AG04450 (cell line): ENCODE measurements at regions of chr12 and their contacts with region 1.

Region 1: GRCh38 chr12:121811434-121812319 is 7.9 kb downstream of the SETD1B start:
- DNase-seq: no peak
- H3K4me3 ChIP-seq: peak overlapping the region; percentile 77
- H3K27ac ChIP-seq: peak overlapping the region; percentile 61
- H3K27me3 ChIP-seq: no peaks in the 10 kb centered on the region
- CTCF ChIP-seq: peak; percentile 77

Region 2: DNA sequence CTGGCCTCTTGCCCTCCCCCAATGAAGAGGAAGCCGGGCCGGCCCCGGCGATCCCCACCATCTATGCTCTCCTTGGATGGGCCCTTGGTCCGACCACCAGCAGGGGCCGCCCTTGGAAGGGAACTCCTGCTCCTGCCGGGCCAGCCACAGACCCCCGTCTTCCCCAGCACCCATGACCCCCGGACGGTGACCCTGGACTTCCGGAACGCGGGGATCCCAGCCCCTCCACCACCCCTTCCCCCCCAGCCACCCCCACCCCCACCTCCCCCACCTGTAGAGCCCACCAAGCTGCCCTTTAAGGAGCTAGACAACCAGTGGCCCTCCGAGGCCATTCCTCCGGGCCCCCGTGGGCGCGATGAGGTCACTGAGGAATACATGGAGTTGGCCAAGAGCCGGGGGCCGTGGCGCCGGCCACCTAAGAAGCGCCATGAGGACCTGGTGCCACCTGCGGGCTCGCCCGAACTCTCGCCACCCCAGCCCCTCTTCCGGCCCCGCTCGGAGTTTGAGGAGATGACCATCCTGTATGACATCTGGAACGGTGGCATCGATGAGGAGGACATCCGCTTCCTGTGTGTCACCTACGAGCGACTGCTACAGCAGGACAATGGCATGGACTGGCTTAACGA is 11.5 kb after region 1 on chr12:
- CTCF ChIA-PET with region 1: interaction called, 20 read pairs
- POLR2A ChIA-PET with region 1: no interaction called
- DNase-seq: no peak
- H3K4me3 ChIP-seq: no peak overlapping the region
- H3K27ac ChIP-seq: no peak overlapping the region
- H3K27me3 ChIP-seq: no peaks in the 10 kb centered on the region
- CTCF ChIP-seq: peak; percentile 11; the same call in 1 of the 2 replicates

Region 3: DNA sequence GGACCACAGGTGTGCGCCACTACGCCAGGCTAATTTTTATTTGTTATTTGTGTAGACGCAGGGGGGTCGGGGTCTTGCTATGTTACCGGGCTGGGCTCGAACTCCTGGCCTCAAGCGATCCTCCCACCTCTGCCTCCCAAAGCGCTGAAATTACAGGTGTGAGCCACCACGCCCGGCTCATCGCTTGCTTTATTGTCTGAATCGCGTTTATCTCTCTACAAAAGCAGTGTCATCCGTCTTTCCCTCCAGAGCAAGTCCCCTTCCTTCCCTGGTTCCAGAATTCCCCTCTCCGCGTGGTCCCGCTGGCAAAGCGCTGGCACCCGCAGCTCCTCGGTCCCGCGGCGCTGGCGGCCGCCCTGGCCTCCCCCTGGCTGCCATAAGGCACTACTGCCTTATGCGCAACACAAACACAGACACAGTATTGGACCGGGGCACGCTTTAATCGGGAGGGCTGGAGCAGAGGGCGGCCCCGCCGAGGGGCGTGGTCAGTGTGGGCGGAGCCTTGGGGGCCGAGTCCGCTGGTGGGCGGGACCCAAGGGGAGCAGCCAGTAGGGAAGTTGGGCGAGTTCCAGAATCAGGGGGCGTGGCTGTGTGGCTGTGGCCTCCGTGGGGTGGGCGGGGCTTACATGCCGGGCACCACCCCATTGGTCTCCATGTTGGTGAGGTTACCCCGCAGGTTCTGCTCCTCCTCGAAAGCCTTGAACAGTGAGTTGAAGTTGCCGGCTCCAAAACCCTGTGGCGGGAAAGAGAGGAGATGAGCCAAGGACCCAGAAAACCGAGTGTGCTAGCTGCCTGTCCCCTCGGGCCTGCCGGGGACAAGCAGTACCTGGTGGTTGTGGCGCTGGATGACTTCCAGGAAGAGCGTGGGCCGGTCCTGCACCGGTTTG is 27.7 kb after region 1 on chr12:
- CTCF ChIA-PET with region 1: interaction called, 13 read pairs
- POLR2A ChIA-PET with region 1: no interaction called
- DNase-seq: peak; percentile 95
- H3K4me3 ChIP-seq: peak overlapping the region; percentile 75
- H3K27ac ChIP-seq: no peak overlapping the region
- H3K27me3 ChIP-seq: no peaks in the 10 kb centered on the region
- CTCF ChIP-seq: peak; percentile 57

Region 4: GRCh38 chr12:121872546-121873215 is 61.0 kb after region 1 on chr12:
- CTCF ChIA-PET with region 1: interaction called, 7 read pairs
- POLR2A ChIA-PET with region 1: interaction called, 10 read pairs
- DNase-seq: peak; percentile 98
- H3K4me3 ChIP-seq: peak overlapping the region; percentile 27
- H3K27ac ChIP-seq: peak overlapping the region; percentile 97
- H3K27me3 ChIP-seq: no peaks in the 10 kb centered on the region
- CTCF ChIP-seq: no peak

Region 5: DNA sequence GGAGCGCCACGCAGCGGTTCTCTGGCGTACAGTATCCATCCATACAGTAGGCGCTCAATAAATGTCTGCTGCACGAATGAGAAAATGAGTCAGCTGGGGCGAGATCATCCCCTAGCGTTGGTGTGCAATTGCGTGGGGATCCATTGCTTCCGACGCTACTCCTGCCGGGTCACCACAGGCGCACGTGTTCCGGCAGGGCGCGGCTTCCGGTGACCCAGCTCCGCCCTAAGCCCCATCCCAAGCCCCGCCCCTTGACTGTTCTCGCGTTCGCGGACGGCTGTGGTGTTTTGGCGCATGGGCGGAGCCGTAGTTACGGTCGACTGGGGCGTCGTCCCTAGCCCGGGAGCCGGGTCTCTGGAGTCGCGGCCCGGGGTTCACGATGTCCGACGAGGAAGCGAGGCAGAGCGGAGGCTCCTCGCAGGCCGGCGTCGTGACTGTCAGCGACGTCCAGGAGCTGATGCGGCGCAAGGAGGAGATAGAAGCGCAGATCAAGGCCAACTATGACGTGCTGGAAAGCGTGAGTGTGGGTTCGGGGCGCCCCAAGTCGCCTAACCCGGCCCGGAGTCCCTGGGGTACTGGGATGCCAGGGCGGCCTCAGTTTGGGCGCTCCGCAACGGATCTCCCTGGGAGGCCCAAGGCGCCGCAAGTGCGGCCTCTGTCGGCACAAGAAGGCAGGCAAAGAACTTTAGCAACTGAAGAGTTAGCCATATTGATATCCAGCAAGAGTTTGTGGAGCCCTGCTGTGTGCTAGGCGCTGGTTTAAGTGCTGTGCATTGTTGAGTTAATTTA is 77.0 kb after region 1 on chr12 and contains the start of gene PSMD9:
- CTCF ChIA-PET with region 1: interaction called, 19 read pairs
- POLR2A ChIA-PET with region 1: interaction called, 5 read pairs
- DNase-seq: peak; percentile 94
- H3K4me3 ChIP-seq: peak within 1 kb of the TSS; percentile 94
- H3K27ac ChIP-seq: peak within 1 kb of the TSS; percentile 98
- H3K27me3 ChIP-seq: no peaks in the 10 kb centered on the region
- CTCF ChIP-seq: peak; percentile 87
- polyA plus RNA-seq, gene PSMD9: 57.7 and 76.1 TPM in 2 replicates